ENCODE measurements at regions of chr16 and their contacts with region 1.

Region 1: GRCh38 chr16:66728117-66728787 is 23.2 kb downstream of the DYNC1LI2 start:
- DNase-seq: peak; percentile 67
- H3K4me3 ChIP-seq: no peak overlapping the region
- H3K27ac ChIP-seq: peak overlapping the region in 1 of 4 donors; percentile 36
- H3K4me1 ChIP-seq: peaks cover 0 to 18% (median 10%) of the 10 kb centered on the region in 4 donors
- H3K27me3 ChIP-seq: no peaks in the 10 kb centered on the region
- CTCF ChIP-seq: peak; percentile 35 to 69 (median 60)
- EP300 ChIP-seq: no peak
- POLR2A ChIP-seq: no peak

Region 2: GRCh38 chr16:66639091-66639885 is 89.0 kb before region 1 on chr16:
- intact Hi-C with region 1: no loop called
- DNase-seq: no peak
- H3K4me3 ChIP-seq: no peak overlapping the region
- H3K27ac ChIP-seq: no peak overlapping the region
- H3K4me1 ChIP-seq: no peaks in the 10 kb centered on the region
- H3K27me3 ChIP-seq: no peaks in the 10 kb centered on the region
- CTCF ChIP-seq: no peak
- EP300 ChIP-seq: no peak
- POLR2A ChIP-seq: no peak

Region 3: GRCh38 chr16:66660422-66661209 is 67.6 kb before region 1 on chr16:
- intact Hi-C with region 1: no loop called
- DNase-seq: peak; percentile 87
- H3K4me3 ChIP-seq: no peak overlapping the region
- H3K27ac ChIP-seq: peak overlapping the region; percentile 67 to 80 (median 74)
- H3K4me1 ChIP-seq: peaks cover 0 to 35% (median 27%) of the 10 kb centered on the region in 4 donors
- H3K27me3 ChIP-seq: no peaks in the 10 kb centered on the region
- CTCF ChIP-seq: peak in 1 of 4 experiments; percentile 10
- EP300 ChIP-seq: no peak
- POLR2A ChIP-seq: no peak

Region 4: DNA sequence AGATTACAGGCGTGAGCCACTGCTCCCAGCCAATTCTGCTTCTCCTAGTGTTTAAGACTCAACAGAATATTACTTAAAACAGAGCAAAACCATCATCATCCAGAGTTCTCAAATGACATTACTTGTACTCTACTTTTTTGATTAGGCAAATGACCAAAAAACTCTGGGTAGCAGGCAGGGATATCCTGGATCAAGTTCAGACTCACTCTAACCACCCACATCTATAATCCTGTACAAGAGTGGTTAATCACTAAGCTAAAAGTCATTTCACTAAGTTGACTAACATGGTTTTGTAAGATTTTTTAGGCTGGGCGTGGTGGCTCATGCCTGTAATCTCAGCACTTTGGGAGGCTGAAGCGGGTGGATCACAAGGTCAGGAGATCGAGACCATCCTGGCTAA is 95.8 kb after region 1 on chr16:
- intact Hi-C with region 1: loop called (anchors 10 kb)
- DNase-seq: no peak
- H3K4me3 ChIP-seq: no peak overlapping the region
- H3K27ac ChIP-seq: no peak overlapping the region
- H3K4me1 ChIP-seq: peaks cover 0 to 5% (median 3%) of the 10 kb centered on the region in 4 donors
- H3K27me3 ChIP-seq: no peaks in the 10 kb centered on the region
- CTCF ChIP-seq: no peak
- EP300 ChIP-seq: no peak
- POLR2A ChIP-seq: no peak

Region 5: DNA sequence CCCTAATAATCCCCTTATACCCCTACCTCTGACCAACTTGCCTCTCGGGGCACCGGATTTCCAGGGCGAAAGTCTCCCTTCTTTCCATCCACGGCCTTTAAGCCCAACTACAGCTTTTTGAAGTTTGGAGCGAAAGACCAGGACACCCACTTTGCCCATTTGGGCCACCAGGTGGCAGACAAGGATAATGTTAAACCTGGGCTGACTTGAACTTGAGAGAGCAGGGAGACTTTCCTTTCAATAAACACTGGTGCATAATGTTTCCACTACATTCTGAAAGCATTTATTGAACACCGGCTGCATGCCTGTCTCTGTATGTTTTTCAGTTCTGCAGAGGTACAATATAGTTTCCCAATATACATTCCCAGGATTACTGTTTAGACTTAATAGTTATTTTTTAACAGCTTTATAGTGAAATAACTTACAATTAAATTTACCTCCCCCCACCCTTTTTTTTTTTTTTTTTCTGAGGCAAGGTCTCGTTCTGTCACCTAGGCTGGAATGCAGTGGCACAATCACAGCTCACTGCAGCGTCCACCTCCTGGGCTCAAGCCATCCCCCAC is 225.9 kb after region 1 on chr16:
- intact Hi-C with region 1: no loop called
- DNase-seq: peak; percentile 79
- H3K4me3 ChIP-seq: no peak overlapping the region
- H3K27ac ChIP-seq: no peak overlapping the region
- H3K4me1 ChIP-seq: peaks cover 0 to under 1% (median under 1%) of the 10 kb centered on the region in 4 donors
- H3K27me3 ChIP-seq: peaks cover 0 to 45% (median 3%) of the 10 kb centered on the region in 3 donors
- CTCF ChIP-seq: peak; percentile 31 to 76 (median 68)
- EP300 ChIP-seq: no peak
- POLR2A ChIP-seq: no peak

Measured in sigmoid colon (tissue), 7 donors.